ENCODE measurements at regions of chr19 and their contacts with region 1.

Region 1: GRCh38 chr19:55258828-55259539 is at the start of gene PPP6R1:
- DNase-seq: peak; percentile 98
- total RNA-seq, gene PPP6R1: 43.0 TPM

Region 2: GRCh38 chr19:55216461-55217198 is 42.4 kb before region 1 on chr19:
- intact Hi-C with region 1: loop called (anchors 2 kb)
- DNase-seq: no peak

Region 3: DNA sequence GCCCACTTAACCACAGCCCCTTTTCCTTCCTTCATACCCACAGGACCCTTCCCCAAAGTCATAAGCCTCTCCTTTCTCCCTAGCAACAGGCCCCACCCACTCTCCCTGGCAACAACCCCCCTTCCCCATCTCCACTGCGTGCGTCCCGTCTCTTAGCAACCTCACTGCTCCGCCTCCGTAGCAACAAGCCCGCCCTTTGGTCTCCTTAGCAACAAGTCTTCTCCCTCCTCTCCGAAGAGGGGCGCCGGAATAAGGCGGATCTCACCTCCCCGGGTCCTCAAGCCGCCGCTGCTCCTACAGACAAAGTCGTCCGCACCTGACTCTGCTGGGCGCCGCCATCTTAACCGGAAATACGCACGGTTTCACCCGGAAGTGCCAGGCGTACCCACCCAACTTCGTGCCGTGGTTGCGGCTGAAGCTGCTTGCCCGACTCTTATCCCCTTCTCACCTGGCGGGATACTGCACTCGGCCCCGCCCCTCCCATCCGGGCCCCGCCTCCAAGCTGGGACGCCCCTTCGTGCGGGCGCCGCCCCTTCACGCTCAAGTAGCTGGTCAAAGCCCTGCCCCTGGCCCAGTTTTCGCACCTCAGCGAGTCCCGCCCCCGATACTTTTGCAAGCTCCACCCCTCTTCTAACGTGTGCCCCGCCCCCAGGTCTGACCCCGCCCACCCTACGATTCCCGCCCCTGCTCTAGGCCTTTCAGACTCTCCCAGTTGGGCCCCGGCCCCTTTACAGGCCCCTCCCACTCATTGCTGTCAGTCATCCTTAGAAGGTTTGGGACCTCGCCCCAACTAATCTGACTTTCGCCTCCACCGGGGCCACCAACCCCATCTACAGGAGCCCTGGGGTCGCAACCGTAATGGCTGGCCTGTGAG is 21.0 kb after region 1 on chr19 and contains the start of gene HSPBP1:
- intact Hi-C with region 1: loop called (anchors 1 kb)
- DNase-seq: peak; percentile 94
- total RNA-seq, gene HSPBP1: 24.6 TPM